HepG2 (cell line): ENCODE measurements at regions of chr7 and their contacts with region 1.

Region 1: DNA sequence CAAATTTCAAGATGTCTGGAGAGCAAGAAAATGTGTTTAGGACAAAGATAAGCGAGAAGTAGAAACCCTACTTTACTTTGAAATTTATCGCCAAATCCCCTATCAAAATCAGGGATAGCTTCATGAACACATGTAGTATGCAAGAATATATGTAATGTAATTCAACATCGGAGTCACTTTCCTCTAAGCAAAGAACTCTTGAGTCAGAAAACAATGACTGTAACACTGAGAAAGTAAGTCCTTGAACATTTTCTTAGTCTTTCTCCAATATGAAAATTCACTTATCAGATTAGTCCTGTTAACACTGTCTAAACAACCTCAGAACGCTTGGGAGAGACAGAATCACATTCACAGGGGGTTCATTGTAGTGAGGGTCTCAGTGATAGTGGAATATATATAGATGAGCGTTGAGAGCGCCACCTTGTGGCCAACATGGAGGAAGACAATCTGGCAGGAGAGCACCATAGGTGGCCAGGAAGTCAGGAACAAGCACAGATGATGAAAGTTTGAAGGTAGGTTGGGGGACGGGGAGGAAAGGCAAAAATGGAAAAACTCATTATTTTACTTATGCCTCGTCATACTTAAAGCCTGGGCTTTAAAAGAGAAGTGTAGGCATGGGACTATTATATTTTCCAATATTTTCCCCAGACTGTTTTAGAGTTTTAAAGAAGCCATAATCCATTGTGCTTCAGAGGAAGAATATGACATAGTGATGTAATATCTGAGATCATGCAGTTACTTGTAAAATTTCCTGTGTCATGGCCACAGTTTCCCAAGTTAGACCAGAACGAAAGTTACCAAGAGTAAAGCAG is 115.5 kb upstream of the GNAI1 start:
- DNase-seq: peak; percentile 43
- ATAC-seq: peak; percentile 97
- H3K4me3 ChIP-seq: peak overlapping the region in 1 of 3 experiments; percentile 44; a peak in 2 of 6 replicates
- H3K27ac ChIP-seq: no peak overlapping the region
- H3K4me1 ChIP-seq: peaks cover 24% of the 10 kb centered on the region
- H3K27me3 ChIP-seq: no peaks in the 10 kb centered on the region
- CTCF ChIP-seq: peak; percentile 82
- EP300 ChIP-seq: no peak
- POLR2A ChIP-seq: no peak
- RAD21 ChIP-seq: 0 out of 2 replicates have a peak, but pooled peaks have one; percentile 24

Region 2: GRCh38 chr7:79272066-79272669 is 747.0 kb before region 1 on chr7:
- CTCF ChIA-PET with region 1: no interaction called
- POLR2A ChIA-PET with region 1: no interaction called
- in situ Hi-C with region 1: no loop called
- intact Hi-C with region 1: loop called (anchors 2 kb)
- DNase-seq: peak; percentile 30
- ATAC-seq: no peak
- H3K4me3 ChIP-seq: no peak overlapping the region
- H3K27ac ChIP-seq: no peak overlapping the region
- H3K4me1 ChIP-seq: no peaks in the 10 kb centered on the region
- H3K27me3 ChIP-seq: no peaks in the 10 kb centered on the region; a peak in 1 of 5 replicates
- CTCF ChIP-seq: peak; percentile 52
- EP300 ChIP-seq: no peak
- POLR2A ChIP-seq: no peak
- RAD21 ChIP-seq: no peak

Region 3: DNA sequence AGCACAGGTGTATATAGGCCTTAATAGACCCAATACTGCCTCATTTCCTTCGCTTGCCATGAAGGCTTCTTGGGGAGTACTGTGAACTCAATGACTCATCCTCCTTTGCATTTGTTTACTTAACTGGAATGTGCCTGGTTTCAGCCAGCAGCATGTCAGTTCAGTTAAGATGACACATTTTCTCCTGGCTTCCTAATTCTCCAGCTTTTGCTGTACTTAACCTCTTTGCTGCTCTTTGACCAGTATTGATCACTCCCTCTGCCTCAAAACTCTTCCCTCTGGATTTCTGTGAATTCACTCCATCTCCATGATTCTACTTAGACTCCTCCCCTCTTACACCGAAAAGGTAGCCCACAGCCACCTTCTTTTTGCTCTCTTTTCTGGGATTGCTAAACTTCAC is 701.4 kb before region 1 on chr7:
- CTCF ChIA-PET with region 1: no interaction called
- POLR2A ChIA-PET with region 1: no interaction called
- in situ Hi-C with region 1: loop called (anchors 25 kb)
- intact Hi-C with region 1: no loop called
- DNase-seq: peak; percentile 80
- ATAC-seq: peak; percentile 96
- H3K4me3 ChIP-seq: no peak overlapping the region
- H3K27ac ChIP-seq: no peak overlapping the region
- H3K4me1 ChIP-seq: peaks cover 18% of the 10 kb centered on the region
- H3K27me3 ChIP-seq: no peaks in the 10 kb centered on the region
- CTCF ChIP-seq: no peak
- EP300 ChIP-seq: peak in 1 of 2 experiments; percentile 33; a peak in 1 of 4 replicates
- POLR2A ChIP-seq: no peak
- RAD21 ChIP-seq: no peak

Region 4: GRCh38 chr7:79806161-79806734 is 212.9 kb before region 1 on chr7:
- CTCF ChIA-PET with region 1: no interaction called
- POLR2A ChIA-PET with region 1: no interaction called
- in situ Hi-C with region 1: no loop called
- intact Hi-C with region 1: loop called (anchors 1 kb)
- DNase-seq: peak; percentile 6
- ATAC-seq: no peak
- H3K4me3 ChIP-seq: no peak overlapping the region
- H3K27ac ChIP-seq: no peak overlapping the region
- H3K4me1 ChIP-seq: no peaks in the 10 kb centered on the region
- H3K27me3 ChIP-seq: no peaks in the 10 kb centered on the region
- CTCF ChIP-seq: peak; percentile 24
- EP300 ChIP-seq: no peak
- POLR2A ChIP-seq: no peak
- RAD21 ChIP-seq: no peak

Region 5: DNA sequence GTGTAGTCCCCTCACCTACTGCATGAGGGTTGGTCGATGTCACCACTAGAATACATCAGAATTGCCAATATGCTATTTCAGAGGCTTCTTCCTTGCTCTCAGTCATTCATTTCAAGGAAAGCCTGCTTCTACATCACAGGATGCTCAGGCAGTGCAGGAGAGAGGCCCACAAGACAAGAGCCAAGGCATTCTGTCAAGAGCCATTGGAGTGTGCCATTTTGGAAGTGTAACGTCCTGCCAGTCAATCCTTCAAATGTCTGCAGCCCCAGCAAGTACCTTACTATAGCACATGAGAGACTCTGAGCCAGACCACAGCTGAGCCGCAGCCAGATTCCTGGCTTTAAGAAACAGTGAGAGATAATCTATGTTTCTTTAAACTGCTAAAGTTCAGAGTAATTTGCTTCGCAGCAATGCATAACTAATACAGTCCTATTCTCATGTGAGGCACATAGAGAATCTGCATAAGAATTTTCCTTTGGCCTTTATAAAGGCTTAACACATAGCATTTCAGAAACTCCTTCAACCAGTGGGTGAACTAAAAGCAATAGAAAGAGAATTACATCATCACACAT is 51.0 kb before region 1 on chr7:
- CTCF ChIA-PET with region 1: no interaction called
- POLR2A ChIA-PET with region 1: no interaction called
- in situ Hi-C with region 1: no loop called
- intact Hi-C with region 1: no loop called
- DNase-seq: no peak
- ATAC-seq: no peak
- H3K4me3 ChIP-seq: no peak overlapping the region
- H3K27ac ChIP-seq: no peak overlapping the region
- H3K4me1 ChIP-seq: no peaks in the 10 kb centered on the region
- H3K27me3 ChIP-seq: no peaks in the 10 kb centered on the region
- CTCF ChIP-seq: no peak
- EP300 ChIP-seq: no peak
- POLR2A ChIP-seq: no peak
- RAD21 ChIP-seq: no peak